Calu3 (cell line): ENCODE measurements at regions of chr16 and their contacts with region 1.

Region 1: DNA sequence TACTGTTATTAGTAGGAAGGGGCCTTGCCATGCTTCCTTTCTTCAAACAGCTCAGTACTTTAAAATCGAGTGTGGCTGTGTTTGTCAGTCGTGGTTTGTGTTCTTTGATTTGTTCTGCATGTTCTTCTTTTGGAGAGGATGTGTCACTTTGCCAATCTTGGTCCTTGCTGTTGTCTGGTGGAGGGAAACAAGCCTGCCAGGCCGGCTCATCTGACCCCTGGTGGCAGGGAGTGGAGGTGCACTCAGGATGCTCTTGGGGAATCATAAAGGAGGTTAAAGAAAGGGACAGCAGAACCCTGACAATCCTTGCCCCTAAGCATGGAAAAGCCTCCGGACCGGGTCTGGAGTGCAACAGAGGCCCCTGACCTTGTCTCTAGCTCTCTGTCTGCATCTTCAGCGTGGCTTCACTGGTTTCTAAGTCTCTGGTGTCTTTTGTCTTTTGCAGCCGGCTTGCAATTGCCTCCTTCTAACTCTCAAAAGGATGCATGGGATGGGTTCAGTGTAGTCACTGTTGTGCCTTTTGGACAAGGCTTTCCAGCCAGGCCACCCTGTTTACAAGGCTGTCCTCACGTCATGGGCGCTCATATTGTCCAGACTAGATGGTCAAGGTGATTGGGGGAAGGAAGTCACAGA is 135.8 kb downstream of the WWOX start:
- DNase-seq: peak; percentile 86
- H3K4me3 Mint-ChIP-seq: no peak overlapping the region
- H3K27ac Mint-ChIP-seq: no peak overlapping the region
- H3K4me1 Mint-ChIP-seq: peaks cover 6% of the 10 kb centered on the region
- H3K27me3 Mint-ChIP-seq: no peaks in the 10 kb centered on the region
- CTCF ChIP-seq: peak; percentile 99

Region 2: GRCh38 chr16:78122774-78123315 is 112.4 kb before region 1 on chr16:
- CTCF ChIA-PET with region 1: no interaction called
- intact Hi-C with region 1: loop called (anchors 1 kb)
- DNase-seq: peak; percentile 32
- H3K4me3 Mint-ChIP-seq: peak overlapping the region; percentile 39
- H3K27ac Mint-ChIP-seq: peak overlapping the region; percentile 46
- H3K4me1 Mint-ChIP-seq: peaks cover 8% of the 10 kb centered on the region
- H3K27me3 Mint-ChIP-seq: no peaks in the 10 kb centered on the region
- CTCF ChIP-seq: peak; percentile 60